Posterior vena cava (tissue), 2 donors: ENCODE measurements at regions of chr10 and their contacts with region 1.

Region 1: DNA sequence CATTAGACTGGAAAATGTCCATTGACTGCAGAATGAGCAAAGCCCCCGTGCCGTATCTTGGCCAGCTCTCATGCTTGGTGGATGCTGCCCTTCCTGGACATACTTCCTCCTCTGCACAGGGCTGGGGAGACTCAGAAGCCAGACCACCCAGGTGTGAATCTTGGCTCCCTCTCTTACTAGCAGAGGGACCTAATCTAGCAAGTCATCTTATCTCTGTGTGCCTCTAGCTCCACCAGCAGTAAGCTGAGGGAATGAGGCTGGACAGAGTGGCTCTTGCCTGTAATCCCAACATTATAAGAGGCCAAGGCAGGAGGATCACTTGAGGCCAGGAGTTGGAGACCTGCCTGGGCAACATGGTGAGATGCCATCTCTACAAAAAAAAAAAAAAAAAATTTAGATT is 173.8 kb upstream of the GHITM start:
- DNase-seq: no peak

Region 2: GRCh38 chr10:83425313-83425712 is 540.2 kb before region 1 on chr10:
- intact Hi-C with region 1: loop called in 1 of 2 experiments (anchors 5 kb)
- DNase-seq: no peak

Region 3: GRCh38 chr10:84004201-84004600 is 38.7 kb after region 1 on chr10:
- intact Hi-C with region 1: loop called in 1 of 2 experiments (anchors 1 kb)
- DNase-seq: no peak